ENCODE measurements at regions of chr7 and their contacts with region 1.

Region 1: GRCh38 chr7:130191791-130192190 is 13.4 kb downstream of the TMEM209 start:
- DNase-seq: no peak
- ATAC-seq: no peak
- H3K4me3 ChIP-seq: no peak overlapping the region
- H3K27ac ChIP-seq: no peak overlapping the region
- H3K4me1 ChIP-seq: no peaks in the 10 kb centered on the region
- H3K27me3 ChIP-seq: no peaks in the 10 kb centered on the region
- CTCF ChIP-seq: no peak
- POLR2A ChIP-seq: no peak
- RAD21 ChIP-seq: no peak

Region 2: GRCh38 chr7:130135208-130136205 is 56.3 kb before region 1 on chr7:
- CTCF ChIA-PET with region 1: no interaction called
- POLR2A ChIA-PET with region 1: no interaction called
- RAD21 ChIA-PET with region 1: no interaction called
- intact Hi-C with region 1: no loop called
- DNase-seq: no peak
- ATAC-seq: no peak
- H3K4me3 ChIP-seq: no peak overlapping the region
- H3K27ac ChIP-seq: no peak overlapping the region
- H3K4me1 ChIP-seq: peaks cover 0 to 8% of the 10 kb centered on the region in 2 experiments; a peak in 2 of 4 replicates
- H3K27me3 ChIP-seq: no peaks in the 10 kb centered on the region
- CTCF ChIP-seq: no peak
- POLR2A ChIP-seq: no peak
- RAD21 ChIP-seq: no peak

Region 3: DNA sequence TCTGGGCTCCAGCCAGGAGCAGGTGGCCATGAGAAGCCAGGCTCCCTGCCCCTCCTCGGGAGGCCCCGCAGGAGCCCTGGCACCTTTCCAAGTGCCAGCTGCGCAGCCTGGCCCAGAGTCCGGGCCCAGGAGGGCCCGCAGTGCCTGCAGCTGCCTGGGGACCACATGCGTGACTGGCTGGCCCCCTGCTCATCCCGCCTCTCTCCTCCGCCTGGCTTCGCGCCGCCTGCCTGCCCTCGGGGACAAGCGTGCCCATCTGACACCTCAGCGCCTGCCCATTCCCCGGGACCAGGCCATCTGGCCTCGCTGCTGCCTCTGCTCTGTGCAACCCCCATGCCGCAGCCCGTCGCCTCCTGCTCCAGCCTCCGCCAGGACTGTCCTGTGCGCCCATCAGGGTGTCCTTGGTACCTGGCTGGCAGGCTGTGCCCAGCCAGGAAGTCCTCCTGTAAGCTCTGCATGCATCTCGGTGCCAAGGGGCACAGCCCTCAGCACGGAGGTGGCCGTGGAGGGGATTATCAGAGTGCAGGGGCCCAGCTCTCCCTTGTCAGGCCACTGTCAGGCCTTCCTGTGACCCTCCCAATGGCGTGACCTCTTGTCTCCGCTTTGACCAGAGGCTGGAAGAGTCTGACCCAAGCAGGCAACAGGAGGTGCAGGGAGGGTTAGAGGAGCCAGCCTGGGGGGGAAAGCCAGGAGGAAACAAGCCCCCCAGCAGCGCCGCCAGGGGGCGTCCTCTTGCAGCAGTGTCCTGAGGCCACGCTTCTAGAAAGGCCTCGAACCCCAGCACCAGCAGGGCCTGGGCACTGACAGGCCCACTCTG is 37.1 kb before region 1 on chr7:
- CTCF ChIA-PET with region 1: no interaction called
- POLR2A ChIA-PET with region 1: no interaction called
- RAD21 ChIA-PET with region 1: no interaction called
- intact Hi-C with region 1: loop called (anchors 5 kb)
- DNase-seq: no peak
- ATAC-seq: peak; percentile 42; the same call in 1 of the 2 replicates
- H3K4me3 ChIP-seq: no peak overlapping the region
- H3K27ac ChIP-seq: no peak overlapping the region
- H3K4me1 ChIP-seq: no peaks in the 10 kb centered on the region
- H3K27me3 ChIP-seq: no peaks in the 10 kb centered on the region
- CTCF ChIP-seq: peak in 2 of 3 experiments; percentile 25 to 31; a peak in 1 of 6 replicates
- POLR2A ChIP-seq: no peak
- RAD21 ChIP-seq: no peak

Measured in HCT116 (cell line).